Naive thymus-derived CD4-positive, alpha-beta T cell (primary cell): ENCODE measurements at regions of chr4 and their contacts with region 1.

Region 1: GRCh38 chr4:77015390-77015789 is 60.4 kb downstream of the CCNI start:
- DNase-seq: no peak
- ATAC-seq: peak; percentile 24
- H3K4me3 ChIP-seq: no peak overlapping the region
- H3K4me3 Mint-ChIP-seq: peak overlapping the region in 5 of 10 donors; percentile 6 to 65 (median 37)
- H3K27ac ChIP-seq: no peak overlapping the region
- H3K27ac Mint-ChIP-seq: peak overlapping the region in 6 of 9 donors; percentile 52 to 76 (median 68)
- H3K4me1 ChIP-seq: peaks cover 0 to 30% of the 10 kb centered on the region in 2 donors
- H3K4me1 Mint-ChIP-seq: peaks cover 12 to 58% (median 49%) of the 10 kb centered on the region in 7 donors
- H3K27me3 ChIP-seq: no peaks in the 10 kb centered on the region
- H3K27me3 Mint-ChIP-seq: peaks cover 0 to 4% (median 0%) of the 10 kb centered on the region in 5 donors

Region 2: DNA sequence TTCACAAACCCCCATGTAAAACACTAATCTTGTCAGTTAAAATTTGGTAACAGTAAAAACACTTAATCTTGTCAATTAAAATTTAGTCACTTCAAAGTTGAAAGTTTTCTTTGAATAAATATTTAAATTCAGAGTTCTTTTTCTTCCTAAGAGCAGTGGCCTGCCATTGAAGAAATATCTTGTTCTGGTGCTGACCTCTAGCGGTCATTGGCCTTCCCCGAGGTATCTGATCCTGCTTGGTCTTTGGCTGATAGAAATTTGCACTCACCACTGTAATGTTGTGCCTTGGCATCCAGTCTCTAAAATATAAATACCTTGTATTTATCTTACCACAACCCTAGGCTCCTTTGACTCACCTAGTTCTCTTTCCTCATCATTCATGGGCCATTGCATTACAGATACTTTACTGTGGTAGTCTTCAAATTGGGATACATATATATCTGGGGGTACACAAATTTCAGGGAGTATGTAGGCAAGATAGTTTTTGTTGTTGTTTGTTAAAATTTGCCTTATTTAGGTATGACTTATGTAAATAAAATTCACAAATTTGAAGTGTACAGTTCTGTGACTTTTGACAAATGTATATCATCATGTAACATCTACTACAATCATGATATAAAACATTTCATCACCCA is 947.6 kb before region 1 on chr4:
- CTCF ChIA-PET with region 1: no interaction called
- POLR2A ChIA-PET with region 1: no interaction called
- intact Hi-C with region 1: no loop called
- DNase-seq: peak; percentile 30 to 72 (median 61)
- ATAC-seq: peak; percentile 93
- H3K4me3 ChIP-seq: no peak overlapping the region
- H3K4me3 Mint-ChIP-seq: no peak overlapping the region
- H3K27ac ChIP-seq: no peak overlapping the region
- H3K27ac Mint-ChIP-seq: no peak overlapping the region
- H3K4me1 ChIP-seq: no peaks in the 10 kb centered on the region
- H3K4me1 Mint-ChIP-seq: no peaks in the 10 kb centered on the region
- H3K27me3 ChIP-seq: no peaks in the 10 kb centered on the region
- H3K27me3 Mint-ChIP-seq: peaks cover 0 to 7% (median 0%) of the 10 kb centered on the region in 5 donors

Region 3: GRCh38 chr4:77031544-77031943 is 16.2 kb after region 1 on chr4:
- CTCF ChIA-PET with region 1: interaction called, 3 read pairs
- POLR2A ChIA-PET with region 1: interaction called, 4 read pairs
- intact Hi-C with region 1: loop called in 1 of 2 experiments (anchors 2 kb)
- DNase-seq: peak in 3 of 9 donors; percentile 31 to 47 (median 31)
- ATAC-seq: peak; percentile 82
- H3K4me3 ChIP-seq: no peak overlapping the region
- H3K4me3 Mint-ChIP-seq: peak overlapping the region in 5 of 10 donors; percentile 9 to 50 (median 10)
- H3K27ac ChIP-seq: no peak overlapping the region
- H3K27ac Mint-ChIP-seq: peak overlapping the region in 5 of 9 donors; percentile 23 to 76 (median 41)
- H3K4me1 ChIP-seq: peaks cover 16 to 31% of the 10 kb centered on the region in 2 donors
- H3K4me1 Mint-ChIP-seq: peaks cover 24 to 50% (median 45%) of the 10 kb centered on the region in 7 donors
- H3K27me3 ChIP-seq: no peaks in the 10 kb centered on the region
- H3K27me3 Mint-ChIP-seq: no peaks in the 10 kb centered on the region